ENCODE measurements at regions of chr19 and their contacts with region 1.

Region 1: GRCh38 chr19:37906869-37907734 is at the start of gene SIPA1L3:
- DNase-seq: peak; percentile 84 to 96 (median 92)
- ATAC-seq: peak; percentile 98
- H3K4me3 ChIP-seq: peak within 1 kb of the TSS; percentile 98
- H3K4me3 Mint-ChIP-seq: peak within 1 kb of the TSS; percentile 97
- H3K27ac ChIP-seq: peak within 1 kb of the TSS; percentile 23 to 68
- H3K27ac Mint-ChIP-seq: peak within 1 kb of the TSS; percentile 91
- H3K4me1 ChIP-seq: peaks cover 26% of the 10 kb centered on the region
- H3K4me1 Mint-ChIP-seq: peaks cover 37% of the 10 kb centered on the region
- H3K27me3 ChIP-seq: no peaks in the 10 kb centered on the region
- H3K27me3 Mint-ChIP-seq: no peaks in the 10 kb centered on the region
- CTCF ChIP-seq: no peak
- total RNA-seq, gene SIPA1L3: 15.5 to 17.7 TPM

Region 2: DNA sequence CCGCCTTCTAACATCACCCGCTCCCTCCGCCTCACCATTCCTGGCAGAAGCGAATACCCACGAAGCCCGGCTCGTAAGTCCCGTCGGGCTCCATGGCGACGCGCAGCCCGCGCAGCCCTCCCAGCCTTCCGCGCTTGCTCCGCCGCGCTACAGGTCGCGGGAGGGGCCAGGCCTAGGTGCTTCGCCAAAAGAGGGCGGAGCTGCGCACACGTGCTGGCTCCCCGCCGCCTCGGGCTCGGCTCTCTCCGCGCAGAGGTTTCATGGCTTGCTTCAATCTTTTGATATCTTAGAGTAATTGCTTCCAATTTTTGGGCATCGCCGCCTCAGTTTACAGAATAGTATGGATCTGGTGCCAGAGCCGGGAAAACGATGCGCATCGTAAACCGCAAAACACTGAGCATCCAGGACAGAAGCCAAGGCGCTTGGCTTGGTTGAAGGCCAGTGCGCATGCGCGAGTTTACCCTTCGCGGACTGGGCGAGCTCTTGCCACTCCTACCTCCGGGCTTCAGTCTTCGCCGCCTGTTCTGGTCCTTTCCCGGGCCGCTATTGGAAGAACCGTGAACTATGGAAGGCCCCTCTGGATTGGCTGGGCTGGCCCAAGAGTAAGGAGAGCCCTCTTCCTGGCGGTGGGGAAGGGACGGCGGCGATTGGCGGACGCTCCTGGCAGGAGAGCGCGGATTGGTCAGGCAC is 1792.2 kb before region 1 on chr19 and contains the start of gene POLR2I:
- CTCF ChIA-PET with region 1: no interaction called
- POLR2A ChIA-PET with region 1: no interaction called
- intact Hi-C with region 1: loop called in 1 of 2 experiments (anchors 5 kb)
- DNase-seq: peak; percentile 96 to 100 (median 99)
- ATAC-seq: peak; percentile 86
- H3K4me3 ChIP-seq: peak within 1 kb of the TSS; percentile 97
- H3K4me3 Mint-ChIP-seq: peak within 1 kb of the TSS; percentile 94
- H3K27ac ChIP-seq: peak within 1 kb of the TSS; percentile 87 to 92
- H3K27ac Mint-ChIP-seq: peak within 1 kb of the TSS; percentile 94
- H3K4me1 ChIP-seq: peaks cover 40% of the 10 kb centered on the region
- H3K4me1 Mint-ChIP-seq: peaks cover 42% of the 10 kb centered on the region
- H3K27me3 ChIP-seq: no peaks in the 10 kb centered on the region
- H3K27me3 Mint-ChIP-seq: no peaks in the 10 kb centered on the region
- CTCF ChIP-seq: no peak
- total RNA-seq, gene POLR2I: 29.2 to 31.1 TPM

Region 3: DNA sequence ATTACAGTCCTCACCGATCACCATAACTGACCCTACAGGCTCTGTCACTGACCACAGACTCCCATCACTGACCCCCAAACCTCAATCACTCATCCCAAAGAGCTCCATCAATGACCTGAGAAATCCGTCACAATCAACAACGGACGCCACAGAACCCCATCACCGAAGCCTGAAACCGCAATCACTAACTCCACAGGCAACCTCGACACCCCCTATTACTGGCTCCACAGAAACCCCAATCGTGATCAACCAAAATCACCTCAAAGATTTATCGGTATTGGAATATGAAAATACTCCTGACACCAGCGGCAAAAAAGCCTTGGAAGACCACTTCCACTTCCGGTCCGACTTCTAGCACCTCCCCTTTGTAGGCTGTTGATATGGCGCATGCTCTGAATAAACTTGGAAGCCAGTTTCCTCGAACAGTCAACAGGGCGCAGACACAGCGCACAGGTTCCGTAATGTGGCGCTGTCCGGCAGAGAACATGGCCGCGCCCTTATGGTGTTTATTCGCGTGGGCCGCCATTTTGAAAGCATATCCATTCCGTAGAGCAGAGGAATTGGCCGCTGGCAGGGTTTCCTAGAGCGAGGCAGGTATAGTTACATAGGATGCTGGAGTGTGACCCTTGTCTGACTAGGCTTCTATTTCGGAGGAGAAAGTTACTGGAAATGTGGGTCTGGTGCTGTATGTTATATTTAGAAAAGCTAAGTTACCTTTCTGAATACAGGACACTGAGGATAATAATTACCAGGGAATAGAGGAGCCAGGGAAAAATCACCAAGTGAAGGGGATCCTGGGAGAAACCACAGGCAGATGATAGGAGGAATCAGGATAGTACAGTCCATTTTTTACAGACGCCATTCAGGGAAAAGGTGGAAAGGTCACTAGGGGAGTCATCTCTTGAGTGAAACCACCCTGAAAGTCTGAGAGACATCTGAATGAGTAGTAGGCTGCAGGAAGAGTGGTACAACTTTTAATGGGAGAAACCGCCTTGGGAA is 734.4 kb before region 1 on chr19 and contains the start of gene ZNF585A:
- CTCF ChIA-PET with region 1: no interaction called
- POLR2A ChIA-PET with region 1: interaction called, 3 read pairs
- intact Hi-C with region 1: loop called in 1 of 2 experiments (anchors 5 kb)
- DNase-seq: peak; percentile 83 to 98 (median 89)
- ATAC-seq: peak; percentile 99
- H3K4me3 ChIP-seq: peak within 1 kb of the TSS; percentile 77
- H3K4me3 Mint-ChIP-seq: no peak within 1 kb of the TSS
- H3K27ac ChIP-seq: peak within 1 kb of the TSS; percentile 63 to 73
- H3K27ac Mint-ChIP-seq: no peak within 1 kb of the TSS
- H3K4me1 ChIP-seq: peaks cover 11% of the 10 kb centered on the region
- H3K4me1 Mint-ChIP-seq: no peaks in the 10 kb centered on the region
- H3K27me3 ChIP-seq: no peaks in the 10 kb centered on the region
- H3K27me3 Mint-ChIP-seq: no peaks in the 10 kb centered on the region
- CTCF ChIP-seq: no peak
- total RNA-seq, gene ZNF585A: 4.5 to 4.6 TPM

Region 4: DNA sequence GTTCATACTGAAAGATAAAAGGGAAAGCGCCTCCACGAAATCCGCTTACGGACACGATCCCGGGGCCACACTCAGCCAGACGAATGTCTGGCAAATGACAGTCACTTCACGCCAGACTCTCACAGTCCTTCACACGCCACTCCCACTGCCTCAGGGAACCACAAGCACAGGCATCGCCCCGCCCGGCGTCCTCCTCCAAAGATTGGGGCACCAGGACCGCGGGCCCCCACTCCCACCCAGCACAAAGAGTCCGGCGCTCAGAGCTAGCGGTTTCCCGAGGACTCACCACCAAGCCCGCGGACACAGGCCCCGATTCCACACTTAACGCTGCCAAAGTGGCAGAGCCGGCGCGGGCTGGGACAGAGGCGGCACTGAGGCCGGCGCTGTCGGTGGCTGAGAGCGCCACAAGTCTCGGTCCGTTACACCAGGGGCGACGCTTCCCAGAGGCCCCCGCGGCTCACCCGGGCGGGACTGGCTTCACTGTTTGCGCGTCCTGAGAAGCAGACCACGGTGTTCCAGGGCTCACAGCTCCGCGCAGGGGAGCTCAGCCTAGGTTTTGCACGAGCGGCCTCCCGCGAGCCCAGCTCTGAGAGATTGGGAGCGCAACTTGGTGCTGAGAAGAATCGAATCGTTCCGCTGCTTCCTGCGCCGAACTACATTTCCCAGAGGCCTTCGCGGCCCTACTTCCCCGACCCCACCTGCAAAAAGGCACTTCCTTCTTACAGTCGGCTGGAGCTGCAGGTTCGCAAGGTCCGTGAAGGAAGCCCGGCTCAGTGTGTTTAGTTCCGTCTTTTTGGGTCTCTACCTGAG is 440.1 kb before region 1 on chr19 and contains the start of gene ZNF569:
- CTCF ChIA-PET with region 1: no interaction called
- POLR2A ChIA-PET with region 1: no interaction called
- intact Hi-C with region 1: loop called in 1 of 2 experiments (anchors 5 kb)
- DNase-seq: peak; percentile 81 to 96 (median 86)
- ATAC-seq: peak; percentile 63
- H3K4me3 ChIP-seq: peak within 1 kb of the TSS; percentile 82
- H3K4me3 Mint-ChIP-seq: peak within 1 kb of the TSS; percentile 93
- H3K27ac ChIP-seq: peak within 1 kb of the TSS; percentile 83 to 87
- H3K27ac Mint-ChIP-seq: peak within 1 kb of the TSS; percentile 100
- H3K4me1 ChIP-seq: peaks cover 32% of the 10 kb centered on the region
- H3K4me1 Mint-ChIP-seq: peaks cover 44% of the 10 kb centered on the region
- H3K27me3 ChIP-seq: no peaks in the 10 kb centered on the region
- H3K27me3 Mint-ChIP-seq: no peaks in the 10 kb centered on the region
- CTCF ChIP-seq: no peak
- total RNA-seq, gene ZNF569: 5.0 to 5.2 TPM

Region 5: DNA sequence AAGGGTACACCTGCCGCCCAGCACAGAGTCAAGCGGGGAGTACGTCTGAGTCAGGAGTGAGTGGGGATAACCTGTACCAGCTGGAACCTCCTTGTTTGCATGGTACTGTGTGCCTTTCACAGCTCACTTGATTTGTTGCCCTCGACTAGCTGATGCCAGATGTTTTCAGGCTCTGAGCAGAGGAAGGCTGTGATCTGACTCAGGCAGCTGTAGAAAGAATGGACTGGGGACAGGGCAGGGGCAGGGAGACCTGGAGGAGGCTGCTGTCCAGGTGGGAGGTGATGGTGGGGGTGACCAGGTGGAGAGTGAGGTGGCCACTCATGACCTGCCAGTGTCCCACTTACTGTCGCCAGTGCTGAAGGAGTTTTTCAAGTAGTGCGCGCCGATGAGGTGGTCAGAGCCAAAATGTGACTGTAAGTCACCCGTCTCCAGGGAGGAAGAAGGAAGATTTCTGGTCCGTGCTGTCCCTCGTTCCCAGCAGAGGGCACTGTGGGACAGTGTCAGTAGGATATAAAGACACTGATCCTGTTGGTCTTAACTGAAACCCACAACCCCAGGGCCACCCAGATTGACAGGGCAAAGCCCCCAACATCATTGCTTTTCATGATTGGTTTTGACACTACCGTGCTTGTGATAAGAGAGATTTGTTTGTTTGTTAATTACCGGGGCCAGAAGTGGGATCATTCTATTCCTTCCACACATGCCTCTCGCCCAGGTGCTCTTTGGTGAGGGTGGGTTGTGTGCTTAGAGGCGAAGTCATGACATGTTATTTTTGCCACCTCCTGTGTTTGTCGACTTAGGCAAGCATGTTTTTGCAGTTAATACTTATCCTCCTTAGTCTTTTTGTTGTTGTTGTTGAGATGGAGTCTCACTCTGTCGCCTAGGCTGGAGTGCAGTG is 188.6 kb after region 1 on chr19:
- CTCF ChIA-PET with region 1: interaction called, 4 read pairs
- POLR2A ChIA-PET with region 1: no interaction called
- intact Hi-C with region 1: loop called in 1 of 2 experiments (anchors 5 kb)
- DNase-seq: peak; percentile 24 to 73 (median 46)
- ATAC-seq: peak; percentile 51
- H3K4me3 ChIP-seq: no peak overlapping the region
- H3K4me3 Mint-ChIP-seq: no peak overlapping the region
- H3K27ac ChIP-seq: no peak overlapping the region
- H3K27ac Mint-ChIP-seq: no peak overlapping the region
- H3K4me1 ChIP-seq: no peaks in the 10 kb centered on the region
- H3K4me1 Mint-ChIP-seq: peaks cover 8% of the 10 kb centered on the region
- H3K27me3 ChIP-seq: no peaks in the 10 kb centered on the region
- H3K27me3 Mint-ChIP-seq: no peaks in the 10 kb centered on the region
- CTCF ChIP-seq: peak; percentile 75

Region 6: DNA sequence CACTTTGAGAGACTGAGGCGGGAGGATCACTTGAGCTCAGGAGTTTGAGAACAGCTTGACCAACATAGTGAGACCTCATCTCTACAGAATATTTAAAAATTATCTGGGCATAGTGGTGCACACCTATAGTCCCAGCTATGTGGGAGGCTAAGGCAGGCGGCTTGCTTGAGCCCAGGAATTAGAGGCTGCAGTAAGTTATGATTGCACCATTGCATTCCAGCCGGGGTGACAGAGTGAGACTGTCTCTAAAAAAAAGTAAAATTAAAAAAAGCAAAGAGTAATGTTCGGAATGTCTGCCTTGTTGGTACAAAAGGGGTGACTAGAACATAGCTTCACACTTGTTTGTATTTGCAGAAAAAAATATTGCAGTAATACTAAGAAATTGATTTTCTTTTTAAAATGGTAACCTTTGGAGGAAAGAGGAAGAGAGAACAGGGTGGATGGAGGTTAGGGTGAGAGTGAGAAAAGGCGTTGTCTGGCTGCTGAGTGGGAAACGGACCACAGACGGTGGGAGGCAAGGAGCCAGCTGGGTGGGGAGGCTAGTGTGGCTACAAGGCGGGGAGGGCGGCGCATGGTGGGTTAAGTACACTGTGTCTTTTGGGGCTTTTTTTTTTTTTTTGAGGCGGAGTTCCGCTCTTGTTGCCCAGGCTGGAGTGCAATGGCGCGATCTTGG is 338.9 kb after region 1 on chr19:
- CTCF ChIA-PET with region 1: interaction called, 8 read pairs
- POLR2A ChIA-PET with region 1: no interaction called
- intact Hi-C with region 1: loop called (anchors 5 kb)
- DNase-seq: no peak
- ATAC-seq: no peak
- H3K4me3 ChIP-seq: no peak overlapping the region
- H3K4me3 Mint-ChIP-seq: no peak overlapping the region
- H3K27ac ChIP-seq: no peak overlapping the region
- H3K27ac Mint-ChIP-seq: no peak overlapping the region
- H3K4me1 ChIP-seq: peaks cover 7% of the 10 kb centered on the region
- H3K4me1 Mint-ChIP-seq: peaks cover 4% of the 10 kb centered on the region
- H3K27me3 ChIP-seq: peaks cover 0 to 2% of the 10 kb centered on the region in 2 experiments
- H3K27me3 Mint-ChIP-seq: no peaks in the 10 kb centered on the region
- CTCF ChIP-seq: no peak

Region 7: DNA sequence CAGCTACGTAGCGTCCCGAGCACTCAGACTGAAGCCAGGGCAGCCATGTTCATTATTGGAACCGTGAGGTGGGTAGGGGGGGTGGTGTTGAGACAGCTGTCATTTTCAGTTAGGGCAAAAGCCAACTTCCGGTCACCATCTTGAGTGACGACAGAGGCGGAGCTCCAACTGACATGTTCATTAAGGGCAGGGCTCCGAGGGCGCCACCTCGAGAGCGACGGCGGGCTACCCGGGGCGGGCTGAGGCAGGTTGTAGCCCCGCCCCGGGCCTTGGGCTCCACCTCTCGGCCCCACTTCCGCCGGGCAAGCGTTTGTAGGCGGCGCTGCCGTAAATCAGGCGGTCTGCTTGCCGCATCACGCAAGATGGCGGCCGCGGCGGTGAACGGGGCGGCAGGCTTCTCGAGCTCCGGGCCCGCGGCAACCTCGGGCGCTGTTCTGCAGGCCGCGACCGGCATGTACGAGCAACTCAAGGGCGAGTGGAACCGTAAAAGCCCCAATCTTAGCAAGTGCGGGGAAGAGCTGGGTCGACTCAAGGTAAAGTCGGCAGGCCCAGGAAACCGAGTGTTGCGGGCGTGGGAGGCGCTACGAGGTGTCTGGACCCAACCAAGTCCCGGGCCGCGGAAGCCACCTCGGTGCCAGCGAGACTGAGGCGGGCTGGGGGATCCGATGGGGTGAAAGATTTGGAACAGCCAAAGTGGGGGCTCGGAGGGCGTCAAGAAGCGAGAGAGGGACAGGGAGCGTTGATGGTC is 467.5 kb after region 1 on chr19 and contains the start of gene PSMD8:
- CTCF ChIA-PET with region 1: interaction called, 5 read pairs
- POLR2A ChIA-PET with region 1: interaction called, 23 read pairs
- intact Hi-C with region 1: loop called (anchors 1 to 2 kb)
- DNase-seq: peak; percentile 95 to 100 (median 98)
- ATAC-seq: peak; percentile 96
- H3K4me3 ChIP-seq: peak within 1 kb of the TSS; percentile 93
- H3K4me3 Mint-ChIP-seq: peak within 1 kb of the TSS; percentile 99
- H3K27ac ChIP-seq: peak within 1 kb of the TSS; percentile 77 to 89
- H3K27ac Mint-ChIP-seq: peak within 1 kb of the TSS; percentile 89
- H3K4me1 ChIP-seq: peaks cover 34% of the 10 kb centered on the region
- H3K4me1 Mint-ChIP-seq: peaks cover 30% of the 10 kb centered on the region
- H3K27me3 ChIP-seq: no peaks in the 10 kb centered on the region
- H3K27me3 Mint-ChIP-seq: peaks cover 6% of the 10 kb centered on the region
- CTCF ChIP-seq: peak; percentile 19
- total RNA-seq, gene PSMD8: 61.2 to 64.4 TPM

Measured in CD4-positive, alpha-beta T cell (primary cell).